Caco-2 (cell line): ENCODE measurements at regions of chr7 and their contacts with region 1.

Region 1: DNA sequence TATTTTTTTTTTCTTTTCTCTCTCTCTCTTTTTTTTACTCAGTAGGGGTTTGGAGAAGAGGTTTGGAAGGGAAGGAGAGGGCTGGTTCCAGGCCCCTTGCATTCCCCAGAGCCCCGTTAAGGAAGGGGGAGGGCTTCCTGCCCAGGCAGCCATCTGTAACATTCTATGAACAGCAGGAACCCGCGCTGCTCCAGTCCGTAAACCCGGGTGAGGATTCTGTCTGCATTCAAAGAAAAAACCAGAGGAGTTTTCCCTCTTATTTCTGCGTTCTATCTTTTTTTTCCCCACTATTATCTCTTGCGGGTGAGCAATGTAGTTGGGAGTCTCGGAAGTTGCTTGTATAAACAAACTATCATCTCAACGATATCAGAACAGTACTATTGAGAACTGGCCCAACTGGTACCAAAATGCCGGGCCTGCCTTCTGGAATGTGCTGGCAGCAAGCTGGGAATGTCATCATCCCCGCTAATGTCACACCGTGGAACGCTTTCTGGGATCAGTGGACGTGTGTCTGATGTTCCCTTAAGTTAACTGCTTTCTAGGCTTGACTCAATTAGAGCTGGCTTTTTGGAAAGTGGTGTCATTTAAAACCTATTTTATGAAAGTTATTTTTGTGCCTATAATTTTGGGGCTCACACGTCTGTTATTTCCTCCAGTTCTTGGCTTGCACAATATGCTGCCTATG is 153.1 kb upstream of the MEOX2 start:
- DNase-seq: no peak
- H3K4me3 ChIP-seq: no peak overlapping the region
- H3K4me3 Mint-ChIP-seq: peak overlapping the region; percentile 57
- H3K27ac Mint-ChIP-seq: peak overlapping the region; percentile 29
- H3K4me1 ChIP-seq: no peaks in the 10 kb centered on the region
- H3K4me1 Mint-ChIP-seq: no peaks in the 10 kb centered on the region
- H3K27me3 ChIP-seq: no peaks in the 10 kb centered on the region
- H3K27me3 Mint-ChIP-seq: no peaks in the 10 kb centered on the region
- CTCF ChIP-seq: no peak

Region 2: GRCh38 chr7:15854841-15855524 is 15.4 kb after region 1 on chr7:
- CTCF ChIA-PET with region 1: no interaction called
- POLR2A ChIA-PET with region 1: no interaction called
- intact Hi-C with region 1: loop called (anchors 1 kb)
- DNase-seq: no peak
- H3K4me3 ChIP-seq: no peak overlapping the region
- H3K4me3 Mint-ChIP-seq: peak overlapping the region; percentile 45
- H3K27ac Mint-ChIP-seq: peak overlapping the region; percentile 74
- H3K4me1 ChIP-seq: peaks cover 30% of the 10 kb centered on the region
- H3K4me1 Mint-ChIP-seq: peaks cover 43% of the 10 kb centered on the region
- H3K27me3 ChIP-seq: no peaks in the 10 kb centered on the region
- H3K27me3 Mint-ChIP-seq: no peaks in the 10 kb centered on the region
- CTCF ChIP-seq: no peak

Region 3: DNA sequence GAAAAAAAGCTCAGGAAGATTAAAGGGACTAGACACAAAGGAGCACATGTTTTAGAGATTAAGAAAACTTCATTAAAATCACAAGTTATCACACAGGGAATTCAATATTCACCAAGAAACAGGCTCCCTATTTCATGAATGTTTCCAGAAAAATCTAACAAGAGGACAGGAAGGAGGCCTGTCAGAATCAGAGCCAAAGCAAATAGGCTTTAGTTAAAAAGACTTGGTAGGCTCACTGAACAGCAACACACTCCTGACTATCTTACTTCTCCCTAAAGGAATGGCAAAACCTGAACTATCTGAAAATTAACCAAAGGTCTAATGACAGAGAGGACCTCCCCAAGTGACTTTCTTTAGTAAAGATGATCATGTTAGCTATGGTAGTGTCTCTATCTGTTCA is 35.2 kb after region 1 on chr7:
- CTCF ChIA-PET with region 1: no interaction called
- POLR2A ChIA-PET with region 1: no interaction called
- intact Hi-C with region 1: no loop called
- DNase-seq: no peak
- H3K4me3 ChIP-seq: no peak overlapping the region
- H3K4me3 Mint-ChIP-seq: no peak overlapping the region
- H3K27ac Mint-ChIP-seq: no peak overlapping the region
- H3K4me1 ChIP-seq: no peaks in the 10 kb centered on the region
- H3K4me1 Mint-ChIP-seq: no peaks in the 10 kb centered on the region
- H3K27me3 ChIP-seq: no peaks in the 10 kb centered on the region
- H3K27me3 Mint-ChIP-seq: no peaks in the 10 kb centered on the region
- CTCF ChIP-seq: no peak